ENCODE measurements at regions of chr16 and their contacts with region 1.

Region 1: DNA sequence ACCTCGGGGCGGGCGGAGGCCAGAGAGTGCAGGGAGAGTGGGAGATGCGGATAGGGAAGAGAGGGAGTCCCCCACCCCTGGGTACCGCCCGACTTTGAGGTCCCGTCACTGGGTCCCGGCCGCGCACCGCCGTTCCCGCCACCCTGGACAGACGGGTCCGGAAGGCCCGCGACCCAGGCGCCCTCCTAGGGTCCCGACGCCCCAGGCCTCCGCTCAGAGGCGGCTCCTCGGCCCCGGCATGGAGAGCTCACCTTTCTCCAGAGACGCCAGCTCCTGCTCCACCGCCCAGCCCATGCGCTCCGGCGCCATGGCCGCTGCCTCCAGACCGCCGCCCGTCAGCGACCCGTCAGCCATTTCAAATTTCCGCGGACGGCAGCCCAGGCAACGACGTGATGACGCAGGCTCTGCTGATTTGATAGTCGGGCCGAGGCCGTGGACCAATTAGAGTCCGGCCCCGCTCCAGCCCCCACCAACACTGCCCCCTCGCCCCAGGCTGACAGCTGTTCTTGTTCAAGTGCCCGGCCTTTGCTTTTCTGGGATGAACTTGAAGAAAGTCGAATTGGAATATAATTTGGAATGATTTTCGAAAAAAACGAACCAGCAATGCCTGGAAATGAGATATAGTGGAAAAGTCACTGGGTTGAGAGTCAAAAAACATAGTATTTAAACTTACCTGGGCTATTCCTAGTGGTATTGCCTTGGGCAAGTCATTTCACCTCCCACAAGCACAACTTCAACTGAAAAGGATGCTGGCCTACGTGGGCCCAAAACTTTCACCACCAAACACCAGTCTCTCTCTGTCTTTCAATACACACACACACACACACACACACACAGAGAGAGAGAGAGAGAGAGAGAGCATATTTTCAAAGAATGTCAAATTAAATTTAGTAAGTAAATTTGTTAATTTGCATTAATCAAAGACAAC is at the start of gene SHCBP1:
- DNase-seq: peak; percentile 84 to 96
- ATAC-seq: peak; percentile 92 to 97
- H3K4me3 ChIP-seq: peak within 1 kb of the TSS; percentile 68
- H3K27ac ChIP-seq: peak within 1 kb of the TSS; percentile 61 to 87; a peak in 5 of 6 replicates
- H3K4me1 ChIP-seq: 0 out of 3 replicates have a peak, but pooled peaks cover 3% of the 10 kb centered on the region
- CTCF ChIP-seq: no peak
- EP300 ChIP-seq: no peak
- POLR2A ChIP-seq: peak; percentile 53
- RAD21 ChIP-seq: no peak
- polyA plus RNA-seq, gene SHCBP1: 40.2 and 53.6 TPM in 2 replicates

Region 2: DNA sequence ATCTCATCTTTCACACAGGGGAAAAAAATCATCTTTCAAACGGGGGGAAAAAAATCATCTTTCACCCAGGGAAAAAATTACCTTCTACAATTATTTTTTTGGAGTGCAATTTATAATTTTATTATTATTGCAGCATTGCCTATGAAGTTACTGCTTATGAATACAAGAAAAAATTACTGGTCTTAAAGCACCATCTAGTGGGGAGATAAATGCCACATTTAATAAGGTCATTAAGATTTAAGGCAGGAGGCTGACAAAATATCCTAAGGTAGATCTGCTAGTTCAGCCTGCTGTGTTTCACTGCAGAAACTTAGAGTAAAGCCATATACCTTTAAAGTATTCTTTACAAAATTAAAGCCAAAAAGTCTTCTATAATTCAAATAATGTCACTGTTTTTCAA is 13.7 kb before region 1 on chr16:
- CTCF ChIA-PET with region 1: interaction called, 28 read pairs
- POLR2A ChIA-PET with region 1: no interaction called
- DNase-seq: peak; percentile 26 to 57
- ATAC-seq: peak; percentile 70 to 77; a peak in 5 of 6 replicates
- H3K4me3 ChIP-seq: no peak overlapping the region
- H3K27ac ChIP-seq: no peak overlapping the region
- H3K4me1 ChIP-seq: no peaks in the 10 kb centered on the region
- CTCF ChIP-seq: peak; percentile 57
- EP300 ChIP-seq: no peak
- POLR2A ChIP-seq: no peak
- RAD21 ChIP-seq: peak; percentile 51 to 65; a peak in 4 of 5 replicates